AG04450 (cell line): ENCODE measurements at regions of chr17 and their contacts with region 1.

Region 1: DNA sequence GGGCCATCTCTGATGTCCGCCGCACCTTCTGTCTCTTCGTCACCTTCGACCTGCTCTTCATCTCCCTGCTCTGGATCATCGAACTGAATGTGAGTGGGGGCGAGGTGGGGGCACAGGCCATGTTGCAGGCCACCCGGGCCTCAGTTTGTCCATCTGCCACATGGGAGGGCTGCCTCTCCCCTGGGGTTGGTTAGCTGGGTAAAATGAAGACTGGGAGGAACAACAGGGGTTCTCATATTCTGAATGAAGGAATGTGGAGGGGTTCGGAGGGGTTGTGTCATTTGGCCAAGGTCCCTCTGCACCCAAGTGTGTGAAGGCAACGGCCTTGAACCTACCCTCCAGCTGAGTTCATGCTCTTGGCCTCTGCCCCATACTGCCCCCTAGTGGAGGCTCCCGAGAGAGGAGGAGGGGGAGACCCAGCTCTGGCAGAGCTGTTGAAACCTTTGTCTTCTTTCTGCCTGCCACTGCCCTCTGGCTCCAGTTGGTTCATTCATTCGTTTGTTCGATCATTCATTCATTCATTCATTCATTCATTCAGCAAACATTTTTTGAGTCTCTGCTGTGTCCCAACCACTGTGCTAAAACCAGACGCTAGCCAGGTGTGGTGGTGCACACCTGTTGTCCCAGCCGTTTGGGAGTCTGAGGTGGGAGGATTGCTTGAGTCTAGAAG is 11.4 kb upstream of the TCAP start:
- DNase-seq: no peak
- H3K4me3 ChIP-seq: no peak overlapping the region
- H3K27ac ChIP-seq: no peak overlapping the region
- H3K27me3 ChIP-seq: no peaks in the 10 kb centered on the region
- CTCF ChIP-seq: peak; percentile 82

Region 2: GRCh38 chr17:39026980-39027451 is 626.8 kb before region 1 on chr17:
- CTCF ChIA-PET with region 1: no interaction called
- POLR2A ChIA-PET with region 1: no interaction called
- DNase-seq: no peak
- H3K4me3 ChIP-seq: peak overlapping the region; percentile 36
- H3K27ac ChIP-seq: no peak overlapping the region
- H3K27me3 ChIP-seq: peaks cover 53% of the 10 kb centered on the region
- CTCF ChIP-seq: no peak

Region 3: GRCh38 chr17:39643271-39643670 is 10.5 kb before region 1 on chr17:
- CTCF ChIA-PET with region 1: interaction called, 12 read pairs
- POLR2A ChIA-PET with region 1: interaction called, 3 read pairs
- DNase-seq: no peak
- H3K4me3 ChIP-seq: no peak overlapping the region
- H3K27ac ChIP-seq: no peak overlapping the region
- H3K27me3 ChIP-seq: no peaks in the 10 kb centered on the region
- CTCF ChIP-seq: no peak